Astrocyte of the cerebellum (primary cell): ENCODE measurements at regions of chr1 and their contacts with region 1.

Region 1: DNA sequence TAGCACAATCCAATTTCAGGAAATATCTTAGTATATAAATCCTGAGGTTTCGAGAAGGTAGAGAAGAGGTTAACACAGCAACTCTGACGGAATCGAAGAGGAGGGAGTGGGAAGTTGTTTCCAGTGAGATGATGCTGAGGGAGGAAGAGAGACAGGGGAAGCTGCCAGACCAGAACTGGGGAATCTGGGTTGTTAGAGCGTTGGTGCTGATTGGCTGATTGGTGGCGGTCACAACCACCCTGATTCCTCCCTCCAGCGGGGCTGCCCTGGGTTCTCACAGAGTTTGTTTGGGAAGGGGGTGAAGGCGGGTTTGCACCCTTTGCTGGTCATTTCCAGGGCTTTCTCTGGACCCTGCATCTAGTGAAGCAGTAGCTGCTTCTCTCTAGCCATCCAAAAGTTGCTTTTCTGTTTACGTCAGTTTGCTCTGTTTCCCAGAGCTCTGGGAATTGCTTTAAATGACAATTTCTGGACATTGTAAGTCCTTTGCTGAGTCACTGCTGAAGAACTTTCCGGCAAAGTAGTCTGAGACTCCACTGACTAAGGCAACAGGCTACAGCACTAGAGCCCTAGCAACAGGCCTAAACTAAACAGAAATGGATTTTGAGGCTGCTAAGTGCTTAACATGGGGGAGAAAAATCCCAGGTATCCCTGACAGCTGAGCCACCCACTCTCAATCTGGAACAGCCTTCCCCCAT is 90.1 kb downstream of the TENT5C start:
- DNase-seq: no peak
- H3K4me3 ChIP-seq: no peak overlapping the region
- CTCF ChIP-seq: no peak

Region 2: DNA sequence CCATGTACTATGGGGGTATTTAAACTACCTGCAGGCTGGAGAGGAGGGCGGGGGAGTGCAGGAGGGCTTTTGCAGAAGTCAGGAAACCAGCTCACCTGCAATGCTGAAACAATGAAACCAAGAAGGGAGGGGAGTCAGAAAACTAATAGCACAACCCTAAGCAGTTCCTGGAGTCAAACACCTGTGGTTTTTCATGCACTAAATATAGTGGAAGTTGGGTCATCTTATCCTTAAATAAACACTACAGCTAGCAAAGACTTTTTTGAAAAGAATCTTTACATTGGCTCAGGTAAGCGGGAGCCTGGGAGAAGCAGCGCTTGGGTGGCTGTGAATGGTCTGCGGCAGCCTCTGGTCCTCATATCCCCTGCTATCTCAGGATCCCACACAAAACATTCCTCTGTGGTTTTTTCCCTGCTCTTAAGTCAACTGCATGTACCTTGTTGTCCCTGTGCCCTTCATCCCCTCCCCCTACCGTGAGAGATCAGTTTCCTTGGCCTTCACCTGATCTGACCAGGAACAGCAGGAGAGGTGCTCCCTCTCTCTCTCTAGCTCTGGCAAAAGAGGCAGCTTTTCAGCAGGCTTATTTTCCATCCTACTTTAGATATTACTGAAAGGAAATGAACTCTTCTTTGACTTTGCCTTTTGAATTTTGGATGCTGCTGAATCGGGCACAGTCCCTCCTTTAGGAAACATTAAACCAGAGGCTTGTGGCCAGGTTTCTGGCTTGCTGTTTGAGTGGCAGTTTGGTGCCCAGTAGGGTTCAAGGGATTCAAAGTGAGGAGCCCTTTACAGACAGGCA is 63.5 kb before region 1 on chr1:
- in situ Hi-C with region 1: no loop called
- DNase-seq: no peak
- H3K4me3 ChIP-seq: no peak overlapping the region
- CTCF ChIP-seq: no peak

Region 3: DNA sequence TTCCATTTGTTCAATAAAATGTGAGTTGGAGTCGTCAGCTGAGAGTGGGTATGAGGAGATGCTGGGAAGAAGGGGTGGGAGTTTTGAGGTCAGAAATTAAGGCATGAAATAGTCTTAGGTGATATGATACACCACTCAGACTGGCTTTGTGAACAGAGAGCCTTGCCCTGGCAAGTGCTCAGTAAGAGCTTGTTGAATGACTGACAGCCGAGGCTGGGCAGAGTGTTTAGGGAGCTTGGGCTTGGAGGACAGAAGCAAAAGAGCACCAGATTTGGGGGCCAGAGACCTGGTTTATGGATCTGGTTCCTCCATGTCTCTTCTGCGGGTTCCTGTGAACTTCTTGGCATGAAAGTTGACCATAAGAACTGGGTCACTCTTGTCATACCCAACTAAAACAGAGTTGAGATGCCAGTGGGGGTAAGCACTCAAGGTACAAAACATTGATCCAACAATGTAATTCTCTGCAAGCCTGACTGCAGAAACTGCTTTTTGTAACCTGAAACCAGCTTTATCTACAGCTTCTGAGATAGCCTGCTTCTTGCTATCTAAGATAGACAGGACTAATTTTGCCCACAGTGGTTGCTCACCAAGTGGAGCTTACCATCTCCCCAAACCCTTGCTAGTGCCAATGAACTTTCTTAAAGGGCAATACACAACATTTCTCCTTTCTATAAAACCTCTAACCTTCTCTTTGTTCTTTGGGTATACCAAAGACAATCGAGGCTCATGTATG is 36.3 kb after region 1 on chr1:
- in situ Hi-C with region 1: loop called (anchors 5 kb)
- DNase-seq: no peak
- H3K4me3 ChIP-seq: no peak overlapping the region
- CTCF ChIP-seq: no peak

Region 4: DNA sequence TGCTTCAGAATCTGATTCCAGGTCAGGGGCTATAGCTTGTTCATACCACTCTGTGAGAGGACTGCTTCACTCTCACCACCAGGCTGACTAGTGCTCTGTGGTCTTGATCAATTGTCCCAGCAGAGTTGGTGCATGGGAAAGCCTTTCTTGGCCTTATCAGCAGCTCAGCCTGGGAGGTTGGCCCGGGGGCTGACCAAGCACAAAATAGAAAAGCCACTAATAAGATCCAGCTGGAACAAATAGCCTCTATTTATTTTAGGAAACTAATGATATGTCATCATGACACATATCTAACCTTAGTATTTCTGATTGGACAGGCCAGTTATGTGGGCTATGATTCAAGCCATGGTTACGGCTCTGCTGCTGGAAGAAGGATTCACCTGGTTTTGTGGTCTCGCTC is 99.2 kb after region 1 on chr1:
- in situ Hi-C with region 1: no loop called
- DNase-seq: peak; percentile 67
- H3K4me3 ChIP-seq: no peak overlapping the region
- CTCF ChIP-seq: peak; percentile 31

Region 5: DNA sequence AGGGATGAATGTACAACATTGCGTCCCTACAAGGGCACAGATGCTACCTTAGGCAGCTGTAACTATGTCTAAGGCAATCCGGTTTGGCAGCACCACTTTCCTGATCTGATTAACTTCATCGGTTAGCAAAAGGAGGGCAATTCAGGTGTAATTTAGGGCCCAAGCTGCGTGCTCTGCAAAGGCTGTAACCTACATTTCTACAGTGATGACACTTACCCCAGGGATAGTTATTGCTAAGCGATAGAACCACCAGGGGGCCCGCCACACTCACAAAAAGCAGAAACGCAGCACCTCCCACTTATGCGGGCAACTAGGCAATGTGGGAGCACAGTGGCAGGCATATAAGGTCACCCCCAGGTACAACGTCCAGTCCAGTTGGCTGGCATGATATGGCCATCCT is 120.0 kb after region 1 on chr1:
- in situ Hi-C with region 1: no loop called
- DNase-seq: no peak
- H3K4me3 ChIP-seq: no peak overlapping the region
- CTCF ChIP-seq: no peak